Motor neuron (in vitro differentiated cells): ENCODE measurements at regions of chr13 and their contacts with region 1.

Region 1: DNA sequence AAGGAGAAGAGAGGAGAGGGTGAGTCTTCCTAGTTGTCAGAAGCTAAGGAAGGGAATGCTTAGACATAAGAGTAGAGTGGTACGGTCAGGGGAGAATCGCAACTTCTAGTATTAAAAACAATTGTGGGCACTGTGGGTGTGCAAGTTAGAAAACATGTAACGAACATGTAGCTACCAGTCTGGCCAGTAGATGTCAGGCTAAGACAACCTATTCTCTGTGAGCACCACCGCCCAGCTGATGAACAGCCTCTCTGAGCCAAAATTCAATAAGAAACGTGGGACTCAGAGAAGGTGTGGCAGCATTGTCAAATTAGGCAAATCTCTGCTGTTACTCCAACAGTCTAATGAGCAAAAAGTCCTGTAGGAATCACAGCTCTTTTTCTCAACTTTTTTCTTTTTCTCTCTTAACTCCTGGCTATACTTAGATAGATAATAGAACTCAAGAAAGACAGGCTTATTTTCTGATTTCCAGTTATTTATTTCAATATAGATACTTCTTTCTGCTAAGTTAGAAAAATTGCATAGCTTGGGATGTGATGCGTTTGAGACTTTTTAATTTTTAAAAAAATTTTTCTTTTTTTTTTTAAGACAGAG is 186.2 kb downstream of the USP12 start:
- ATAC-seq: peak; percentile 49 to 89 (median 74)
- H3K4me3 ChIP-seq: no peak overlapping the region
- H3K27ac ChIP-seq: no peak overlapping the region
- H3K4me1 ChIP-seq: no peaks in the 10 kb centered on the region

Region 2: DNA sequence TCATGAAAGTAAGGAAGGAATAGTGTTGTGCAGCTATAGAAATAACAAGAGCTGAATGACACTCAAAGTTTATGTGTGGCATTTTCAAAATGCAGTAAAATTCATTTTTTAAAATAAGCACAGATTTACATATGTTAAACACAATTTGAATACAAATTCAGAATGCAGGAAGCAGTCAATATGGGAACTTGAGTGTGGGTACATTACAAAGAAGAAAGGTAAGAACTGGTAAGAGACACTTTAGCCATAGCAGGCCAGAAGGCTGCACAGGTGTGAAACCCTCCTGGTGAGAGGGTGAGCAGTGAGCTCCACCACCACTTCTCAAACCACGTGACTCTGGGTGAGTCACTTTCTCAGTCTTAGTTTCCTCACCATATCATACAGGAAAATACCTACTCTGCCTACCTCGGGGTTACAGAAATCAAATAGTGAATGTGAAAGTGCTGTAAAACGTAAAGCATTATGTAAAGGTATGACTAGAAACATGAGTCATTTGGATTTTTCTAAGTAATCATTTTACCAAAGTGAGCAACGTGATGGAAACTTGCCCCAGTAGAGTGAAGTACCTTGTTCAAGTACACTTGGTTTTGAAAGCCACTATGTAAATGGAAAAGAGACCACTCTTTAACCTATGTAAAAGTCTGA is 145.7 kb after region 1 on chr13:
- in situ Hi-C with region 1: no loop called
- ATAC-seq: peak in 3 of 8 experiments; percentile 63 to 69 (median 68)
- H3K4me3 ChIP-seq: no peak overlapping the region
- H3K27ac ChIP-seq: no peak overlapping the region
- H3K4me1 ChIP-seq: no peaks in the 10 kb centered on the region

Region 3: DNA sequence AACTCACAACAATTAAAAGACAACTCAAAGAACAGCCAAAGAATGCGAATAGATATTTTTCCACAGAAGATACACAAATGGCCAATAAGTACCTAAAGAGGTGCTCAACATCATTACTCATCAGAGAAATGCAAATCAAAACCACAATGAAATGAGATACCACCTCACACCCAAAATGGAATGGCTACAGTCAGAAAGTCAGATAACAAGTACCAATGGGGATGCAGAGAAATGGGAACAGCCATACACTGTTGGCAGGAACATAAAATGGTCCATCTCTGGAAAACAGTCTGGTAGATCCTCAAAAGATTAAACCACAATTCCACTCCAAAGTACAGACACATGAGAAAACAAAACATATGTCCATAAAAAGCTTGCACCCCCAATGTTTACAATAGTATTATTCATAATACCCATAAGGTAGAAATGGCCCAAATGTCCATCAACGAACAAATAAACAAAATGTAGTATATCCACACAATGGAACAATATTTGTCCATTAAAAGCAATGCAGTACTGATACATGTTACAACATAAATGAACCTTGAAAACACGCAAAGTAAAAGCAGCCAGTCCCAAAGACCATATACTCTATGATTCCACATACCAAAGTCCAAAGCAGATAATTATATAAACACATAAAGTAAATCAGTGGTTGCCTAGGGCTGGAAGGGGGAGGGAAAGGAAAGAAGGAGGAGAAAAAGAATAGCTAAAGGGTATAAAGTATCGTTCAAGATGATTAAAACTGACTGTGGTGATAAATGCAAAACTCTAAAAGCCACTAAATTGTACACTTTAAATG is 166.6 kb after region 1 on chr13:
- in situ Hi-C with region 1: no loop called
- ATAC-seq: peak in 2 of 8 experiments; percentile 55 to 72
- H3K4me3 ChIP-seq: no peak overlapping the region
- H3K27ac ChIP-seq: no peak overlapping the region
- H3K4me1 ChIP-seq: no peaks in the 10 kb centered on the region

Region 4: GRCh38 chr13:27339299-27339698 is 353.9 kb after region 1 on chr13:
- in situ Hi-C with region 1: loop called in 3 of 9 experiments (anchors 10 to 25 kb)
- ATAC-seq: peak in 3 of 8 experiments; percentile 49 to 87 (median 57)
- H3K4me3 ChIP-seq: no peak overlapping the region
- H3K27ac ChIP-seq: no peak overlapping the region
- H3K4me1 ChIP-seq: peaks cover 0 to 16% of the 10 kb centered on the region in 2 donors

Region 5: DNA sequence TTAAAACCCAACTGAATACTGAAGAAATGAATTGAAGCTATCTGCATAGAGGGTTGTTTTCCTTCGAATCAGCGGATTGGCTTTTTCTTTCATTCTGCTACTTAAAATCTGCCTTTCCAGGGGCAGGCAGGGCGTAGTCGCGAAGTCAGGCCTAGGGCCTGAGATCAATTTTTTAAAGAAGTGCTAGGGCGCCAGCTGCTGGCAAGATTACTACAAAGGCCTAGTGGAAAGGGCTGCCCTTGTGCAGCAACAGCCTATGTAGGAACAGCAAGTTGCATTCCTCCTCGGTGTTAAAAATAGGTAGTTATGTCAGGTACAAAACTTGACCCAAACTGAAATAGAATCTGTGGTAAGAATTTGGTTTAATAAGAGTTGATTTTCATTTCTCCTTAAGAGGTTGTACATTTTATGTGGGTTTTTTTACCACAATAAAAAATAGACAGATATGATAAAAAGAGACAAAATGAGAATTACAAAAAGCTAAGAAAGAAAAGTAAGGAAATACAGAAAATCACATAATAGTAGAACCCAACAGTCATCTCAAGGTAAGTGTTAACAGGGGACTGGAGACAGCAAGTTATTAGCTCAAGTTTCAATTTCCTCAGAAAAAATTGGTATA is 1012.6 kb after region 1 on chr13:
- in situ Hi-C with region 1: loop called in 4 of 9 experiments (anchors 25 kb)
- ATAC-seq: peak; percentile 67 to 99 (median 82)
- H3K4me3 ChIP-seq: no peak overlapping the region
- H3K27ac ChIP-seq: no peak overlapping the region
- H3K4me1 ChIP-seq: no peaks in the 10 kb centered on the region